ENCODE measurements at regions of chr16 and their contacts with region 1.

Region 1: DNA sequence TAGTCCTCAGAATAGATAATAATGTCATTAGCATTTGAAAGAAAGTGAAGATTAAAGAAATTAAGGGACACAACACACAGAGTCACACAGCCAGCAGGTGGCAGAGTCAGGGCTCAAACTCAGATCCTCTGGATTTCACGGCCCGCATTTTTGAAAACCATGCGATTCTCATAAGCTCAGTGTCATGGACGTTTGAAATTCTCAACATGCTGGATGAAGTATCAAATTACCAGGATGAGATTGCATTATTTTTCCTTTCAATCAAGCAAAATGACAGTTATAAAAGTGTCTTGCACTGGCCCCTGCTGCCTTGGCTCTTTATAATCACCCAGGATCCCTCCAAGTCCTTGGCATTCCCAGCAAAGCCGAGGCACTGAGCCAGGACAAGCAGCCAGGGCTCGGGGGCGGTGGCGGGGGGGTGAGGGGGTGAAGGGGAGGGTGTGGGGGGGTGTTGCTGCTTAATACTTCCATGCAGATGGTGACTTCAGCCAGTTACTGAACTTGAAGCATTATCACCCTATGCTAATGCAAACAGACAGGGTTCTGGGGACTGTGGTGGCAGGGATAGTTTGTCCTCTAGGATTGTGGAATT is 6.6 kb upstream of the BMERB1 start:
- DNase-seq: peak in 9 of 10 donors; percentile 29 to 93 (median 60)

Region 2: GRCh38 chr16:15477802-15478201 is 50.1 kb after region 1 on chr16:
- intact Hi-C with region 1: loop called (anchors 5 kb)
- DNase-seq: no peak

Region 3: DNA sequence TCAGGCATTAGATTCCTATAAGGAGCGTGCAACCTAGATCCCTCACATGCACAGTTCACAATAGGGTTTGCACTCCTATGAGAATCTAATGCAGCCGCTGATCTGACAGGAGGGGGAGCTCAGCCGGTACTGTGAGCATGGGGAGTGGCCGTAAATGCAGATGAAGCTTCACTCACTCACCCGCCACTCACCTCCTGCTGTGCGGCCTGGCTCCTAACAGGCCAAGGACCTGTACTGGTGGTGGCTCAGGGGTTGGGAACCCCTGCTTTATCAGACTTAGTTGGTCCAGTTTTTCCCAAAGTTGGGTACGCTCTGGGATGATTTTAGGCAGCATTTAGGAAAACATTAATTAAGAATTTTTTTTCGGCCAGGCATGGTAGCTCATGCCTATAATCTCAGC is 111.5 kb after region 1 on chr16:
- intact Hi-C with region 1: loop called (anchors 10 kb)
- DNase-seq: peak in 1 of 10 donors; percentile 12

Region 4: DNA sequence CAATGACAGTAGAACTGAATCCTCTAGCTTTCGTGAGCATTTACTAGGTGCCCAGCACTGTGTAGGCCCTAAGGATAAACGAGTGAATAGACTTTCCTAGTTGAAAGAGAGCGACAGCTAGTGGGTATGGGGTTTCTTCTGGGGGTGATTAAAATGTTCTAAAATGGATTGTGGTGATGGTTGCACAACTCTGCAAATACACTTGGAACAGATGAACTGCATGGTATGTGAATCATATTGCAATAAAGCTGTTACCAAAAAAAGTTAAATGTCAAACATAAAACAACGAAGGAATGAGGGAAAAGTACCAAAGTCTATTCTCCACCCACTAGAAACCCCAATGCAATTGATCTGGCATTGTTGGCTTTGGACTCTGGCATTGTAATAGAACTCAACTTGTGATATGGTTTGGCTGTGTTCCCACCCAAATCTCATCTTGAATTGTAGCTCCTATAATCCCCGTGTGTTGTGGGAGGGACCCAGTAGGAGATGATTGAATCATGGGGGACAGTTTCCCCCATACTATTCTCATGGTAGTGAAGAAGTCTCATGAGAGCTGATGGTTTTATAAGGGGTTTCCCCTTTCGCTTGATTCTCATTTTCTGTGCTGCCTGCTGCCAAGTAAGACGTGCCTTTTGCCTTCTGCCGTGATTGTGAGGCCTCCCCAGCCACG is 144.7 kb after region 1 on chr16:
- intact Hi-C with region 1: no loop called
- DNase-seq: no peak

Measured in posterior cingulate gyrus (tissue), 11 donors.